ENCODE measurements at regions of chr19 and their contacts with region 1.

Region 1: GRCh38 chr19:44113138-44113783 is at the start of gene ZNF225:
- DNase-seq: peak; percentile 95
- H3K4me3 Mint-ChIP-seq: peak within 1 kb of the TSS; percentile 99
- H3K27ac Mint-ChIP-seq: peak within 1 kb of the TSS; percentile 91
- H3K4me1 Mint-ChIP-seq: peaks cover 17% of the 10 kb centered on the region
- H3K27me3 Mint-ChIP-seq: no peaks in the 10 kb centered on the region
- total RNA-seq, gene ZNF225: 2.7 and 3.2 TPM in 2 replicates

Region 2: DNA sequence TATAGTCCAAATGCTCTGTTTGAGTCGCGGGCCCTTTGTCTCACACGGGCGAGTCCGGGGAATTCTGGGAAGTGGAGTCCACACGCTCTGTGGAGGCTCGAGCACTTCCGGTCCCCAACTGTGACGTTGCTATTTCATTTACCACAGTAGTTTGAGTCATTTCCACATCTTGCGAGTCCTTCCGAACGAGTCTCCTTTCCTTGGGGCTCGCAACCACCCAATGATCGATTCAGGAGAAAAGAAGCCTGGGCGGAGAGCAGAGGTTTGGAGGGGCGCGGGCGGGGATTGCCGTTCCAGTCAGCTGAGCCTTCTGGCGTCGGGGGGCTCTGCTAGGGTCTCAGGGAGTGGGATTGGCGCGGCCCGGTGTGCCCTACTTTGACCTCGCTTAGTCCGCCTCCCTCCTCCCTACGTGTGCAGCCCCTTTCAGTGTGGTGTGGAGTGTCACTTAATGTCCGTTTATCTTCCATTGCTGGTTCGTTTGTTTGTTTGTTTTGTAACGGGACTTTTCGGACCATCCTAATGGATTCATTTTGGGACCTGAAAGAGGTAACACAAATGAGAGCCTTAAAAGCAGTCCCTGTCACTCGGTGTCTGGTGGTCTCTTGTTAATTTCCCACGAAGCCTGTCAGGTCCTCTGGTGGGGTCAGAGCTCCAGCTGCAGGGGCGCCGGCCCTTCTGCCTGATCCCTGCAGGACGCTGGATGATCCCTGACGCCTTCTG is 87.9 kb before region 1 on chr19 and contains the start of gene ZNF222:
- intact Hi-C with region 1: loop called (anchors 1 kb)
- DNase-seq: peak; percentile 92
- H3K4me3 Mint-ChIP-seq: peak within 1 kb of the TSS; percentile 99
- H3K27ac Mint-ChIP-seq: peak within 1 kb of the TSS; percentile 91
- H3K4me1 Mint-ChIP-seq: peaks cover 16% of the 10 kb centered on the region
- H3K27me3 Mint-ChIP-seq: no peaks in the 10 kb centered on the region
- total RNA-seq, gene ZNF222: 1.1 and 1.8 TPM in 2 replicates

Region 3: DNA sequence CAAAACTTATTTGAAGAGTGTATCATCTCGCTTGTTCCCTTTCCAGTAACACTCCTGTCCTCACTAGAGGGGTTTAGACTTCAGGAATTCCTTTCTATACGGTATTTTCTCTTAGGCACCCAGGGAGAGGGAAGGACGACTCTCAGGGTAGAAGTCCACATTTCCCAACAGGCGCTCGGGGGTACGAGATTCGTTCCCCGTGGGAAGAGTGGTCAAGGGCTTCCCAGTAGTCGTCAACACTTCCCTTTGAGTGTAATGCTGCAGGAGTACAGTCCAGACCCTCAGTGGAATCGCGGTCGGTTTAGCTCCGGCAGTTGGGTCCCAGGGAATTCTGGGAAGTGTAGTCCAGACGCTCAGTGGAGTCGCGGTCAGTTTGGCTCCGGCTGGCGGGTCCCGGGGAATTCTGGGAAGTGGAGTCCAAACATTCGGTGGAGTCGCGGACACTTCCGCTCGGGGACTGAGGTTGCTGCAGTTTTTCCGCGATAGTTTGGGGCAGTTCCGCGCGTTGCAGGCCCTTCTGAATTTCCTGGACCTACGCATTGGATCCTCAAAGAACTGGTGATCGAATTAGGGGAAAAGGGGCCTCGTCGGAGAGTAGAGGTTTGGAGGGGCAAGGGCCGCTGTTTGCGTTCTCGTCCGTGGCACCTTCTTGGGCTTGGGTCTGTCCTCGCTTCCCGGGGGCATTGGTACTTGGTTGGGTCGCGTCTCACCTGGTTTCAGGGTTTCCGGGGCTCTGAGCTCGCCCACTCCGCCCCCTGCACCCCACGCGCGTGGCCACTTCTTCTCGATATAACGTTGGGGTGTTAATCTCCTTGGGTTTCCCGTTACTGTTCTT is 19.1 kb before region 1 on chr19 and contains the start of gene ZNF224:
- intact Hi-C with region 1: loop called (anchors 1 kb)
- DNase-seq: peak; percentile 94
- H3K4me3 Mint-ChIP-seq: peak within 1 kb of the TSS; percentile 98
- H3K27ac Mint-ChIP-seq: peak within 1 kb of the TSS; percentile 91
- H3K4me1 Mint-ChIP-seq: peaks cover 14% of the 10 kb centered on the region
- H3K27me3 Mint-ChIP-seq: no peaks in the 10 kb centered on the region
- total RNA-seq, gene ZNF224: 17.0 and 17.4 TPM in 2 replicates

Region 4: GRCh38 chr19:44164673-44165512 is 51.6 kb after region 1 on chr19 and contains the start of gene ZNF226:
- intact Hi-C with region 1: loop called (anchors 1 kb)
- DNase-seq: peak; percentile 93
- H3K4me3 Mint-ChIP-seq: peak within 1 kb of the TSS; percentile 98
- H3K27ac Mint-ChIP-seq: peak within 1 kb of the TSS; percentile 96
- H3K4me1 Mint-ChIP-seq: peaks cover 26% of the 10 kb centered on the region
- H3K27me3 Mint-ChIP-seq: no peaks in the 10 kb centered on the region
- total RNA-seq, gene ZNF226: 10.4 and 12.3 TPM in 2 replicates

Region 5: GRCh38 chr19:44182145-44182544 is 68.9 kb after region 1 on chr19:
- intact Hi-C with region 1: no loop called
- DNase-seq: no peak
- H3K4me3 Mint-ChIP-seq: no peak overlapping the region
- H3K27ac Mint-ChIP-seq: no peak overlapping the region
- H3K4me1 Mint-ChIP-seq: no peaks in the 10 kb centered on the region
- H3K27me3 Mint-ChIP-seq: no peaks in the 10 kb centered on the region

Region 6: DNA sequence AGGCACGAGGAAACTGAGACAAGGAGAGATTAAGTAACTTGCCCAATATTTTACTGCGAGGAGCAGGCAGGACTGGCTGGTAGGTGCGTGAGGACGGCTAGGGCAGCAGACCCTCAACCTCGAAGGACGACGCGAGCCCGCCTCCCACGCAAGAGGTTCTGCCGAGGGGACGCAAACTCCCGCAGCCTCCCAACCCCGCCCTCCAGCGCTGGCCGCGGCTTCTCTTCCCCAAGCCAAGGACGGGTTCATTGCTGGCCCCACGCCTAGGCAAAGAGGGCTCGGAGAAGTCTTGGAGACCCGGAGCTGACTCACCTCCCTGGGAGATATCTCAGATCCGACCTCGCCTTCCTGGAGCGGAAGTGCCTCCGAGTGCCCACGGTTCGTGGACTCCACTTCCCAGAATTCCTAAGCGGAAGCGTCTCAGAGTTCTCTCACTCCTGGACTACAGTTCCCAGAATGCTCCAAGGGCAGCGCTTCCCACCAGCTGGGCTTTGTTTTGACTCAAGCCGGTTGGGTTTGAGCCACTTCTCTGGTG is 191.5 kb after region 1 on chr19 and contains the start of gene ZNF235:
- intact Hi-C with region 1: loop called (anchors 1 kb)
- DNase-seq: peak; percentile 90
- H3K4me3 Mint-ChIP-seq: peak within 1 kb of the TSS; percentile 90
- H3K27ac Mint-ChIP-seq: peak within 1 kb of the TSS; percentile 83
- H3K4me1 Mint-ChIP-seq: peaks cover 11% of the 10 kb centered on the region
- H3K27me3 Mint-ChIP-seq: no peaks in the 10 kb centered on the region
- total RNA-seq, gene ZNF235: 2.8 and 3.1 TPM in 2 replicates